Activated B cell treated with CpG ODN at 0.5 μM for 24 hours (primary cell): ENCODE measurements at regions of chr5 and their contacts with region 1.

Region 1: GRCh38 chr5:173707392-173707791 is 90.9 kb upstream of the BOD1 start:
- DNase-seq: peak; percentile 29
- ATAC-seq: peak; percentile 98
- H3K4me3 Mint-ChIP-seq: peak overlapping the region; percentile 4
- H3K27ac Mint-ChIP-seq: peak overlapping the region; percentile 60
- H3K4me1 Mint-ChIP-seq: peaks cover 27% of the 10 kb centered on the region
- H3K27me3 Mint-ChIP-seq: no peaks in the 10 kb centered on the region
- CTCF ChIP-seq: no peak

Region 2: DNA sequence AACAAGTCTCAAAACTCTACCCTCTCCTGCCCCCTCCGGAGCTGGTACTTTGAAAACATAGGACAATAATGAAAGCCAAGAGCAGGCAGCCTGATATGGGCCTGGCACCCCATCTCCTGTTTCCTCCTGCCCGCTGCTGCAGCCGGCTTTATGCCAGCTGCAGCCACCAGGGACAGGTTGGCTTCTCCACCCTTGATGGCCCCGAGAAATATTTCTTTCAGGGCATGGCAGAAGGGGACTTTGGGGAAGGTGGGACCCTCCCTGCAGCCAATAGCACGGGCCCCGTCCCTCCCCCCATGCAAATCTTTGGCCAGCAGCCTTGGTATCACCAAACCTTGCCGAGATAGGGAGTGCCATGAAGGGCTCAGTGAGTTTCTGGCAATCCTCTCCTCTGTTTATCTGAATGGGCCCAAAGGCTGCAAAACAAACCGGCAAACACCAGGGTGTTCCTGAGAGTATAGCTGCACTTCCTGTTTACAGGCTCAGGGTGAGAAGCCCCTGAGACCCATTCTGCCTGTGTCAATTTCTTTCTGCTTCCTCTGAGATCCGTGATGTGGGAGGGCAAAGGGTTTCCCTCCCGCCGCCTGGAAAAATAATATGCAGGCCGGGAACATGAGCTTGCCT is 17.5 kb before region 1 on chr5:
- CTCF ChIA-PET with region 1: no interaction called
- POLR2A ChIA-PET with region 1: no interaction called
- intact Hi-C with region 1: loop called (anchors 2 kb)
- DNase-seq: no peak
- ATAC-seq: peak; percentile 80
- H3K4me3 Mint-ChIP-seq: peak overlapping the region; percentile 32
- H3K27ac Mint-ChIP-seq: peak overlapping the region; percentile 81
- H3K4me1 Mint-ChIP-seq: peaks cover 41% of the 10 kb centered on the region
- H3K27me3 Mint-ChIP-seq: no peaks in the 10 kb centered on the region
- CTCF ChIP-seq: no peak

Region 3: GRCh38 chr5:173745123-173745522 is 37.7 kb after region 1 on chr5:
- CTCF ChIA-PET with region 1: no interaction called
- POLR2A ChIA-PET with region 1: interaction called, 3 read pairs
- intact Hi-C with region 1: loop called (anchors 5 kb)
- DNase-seq: peak; percentile 33
- ATAC-seq: peak; percentile 70
- H3K4me3 Mint-ChIP-seq: peak overlapping the region; percentile 29
- H3K27ac Mint-ChIP-seq: peak overlapping the region; percentile 80
- H3K4me1 Mint-ChIP-seq: peaks cover 60% of the 10 kb centered on the region
- H3K27me3 Mint-ChIP-seq: no peaks in the 10 kb centered on the region
- CTCF ChIP-seq: no peak

Region 4: DNA sequence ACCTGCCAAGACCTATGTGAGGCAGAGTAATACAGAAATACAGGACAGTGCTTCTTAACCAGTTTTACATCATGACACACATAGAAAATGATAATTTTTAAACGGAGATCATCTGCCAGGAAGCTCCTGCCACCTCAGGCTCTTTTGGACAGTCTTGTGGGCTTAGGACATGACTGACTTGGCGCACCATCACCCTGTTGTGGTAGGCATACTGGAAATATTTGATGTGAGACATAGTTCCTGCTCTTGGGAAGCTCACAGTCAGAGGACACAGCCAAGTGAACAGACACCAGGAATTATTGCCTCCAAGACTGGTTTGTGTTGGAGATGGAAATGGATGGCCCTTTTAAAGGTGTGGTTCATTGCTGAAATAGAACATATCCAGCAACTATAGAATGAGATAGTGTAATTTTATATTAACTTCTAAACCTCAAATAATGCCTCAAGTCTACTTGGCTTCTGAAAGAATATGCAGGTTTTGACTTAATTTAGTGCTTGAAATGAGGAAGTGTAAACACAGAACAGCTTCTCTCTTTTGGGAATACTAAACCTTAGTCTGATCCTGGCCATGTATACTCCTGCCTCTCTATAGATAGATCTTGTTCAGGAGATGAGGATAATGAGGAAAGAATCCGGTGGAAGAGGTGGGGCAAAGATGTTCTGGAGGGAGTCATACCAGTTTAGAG is 200.4 kb after region 1 on chr5:
- CTCF ChIA-PET with region 1: no interaction called
- POLR2A ChIA-PET with region 1: no interaction called
- intact Hi-C with region 1: no loop called
- DNase-seq: no peak
- ATAC-seq: no peak
- H3K4me3 Mint-ChIP-seq: no peak overlapping the region
- H3K27ac Mint-ChIP-seq: peak overlapping the region; percentile 16
- H3K4me1 Mint-ChIP-seq: peaks cover 44% of the 10 kb centered on the region
- H3K27me3 Mint-ChIP-seq: no peaks in the 10 kb centered on the region
- CTCF ChIP-seq: no peak